Motor neuron (in vitro differentiated cells): ENCODE measurements at regions of chr5 and their contacts with region 1.

Region 1: DNA sequence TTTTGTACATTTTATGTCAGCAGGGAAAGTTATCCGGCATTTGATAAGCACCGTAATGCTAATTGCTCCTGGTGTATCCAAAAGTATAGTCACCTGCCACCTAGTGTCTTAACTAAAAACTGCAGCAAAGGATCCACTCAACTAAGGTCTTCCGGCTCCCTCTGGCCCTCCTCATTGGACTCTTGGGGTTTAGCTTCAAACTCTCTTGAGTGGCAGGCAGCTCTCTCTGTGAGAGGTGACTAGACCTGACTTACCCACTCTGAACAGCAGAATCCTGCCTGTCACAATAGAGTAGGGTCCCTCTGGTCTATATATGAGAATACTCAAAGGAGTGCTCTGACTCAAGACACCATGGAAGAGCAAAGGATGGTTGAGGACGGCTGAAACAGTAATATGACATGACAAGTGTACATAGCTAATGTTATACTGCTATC is 60.3 kb upstream of the CAST start:
- ATAC-seq: peak; percentile 57 to 91 (median 64)
- H3K4me3 ChIP-seq: no peak overlapping the region
- H3K27ac ChIP-seq: no peak overlapping the region
- H3K4me1 ChIP-seq: peaks cover 0 to 16% of the 10 kb centered on the region in 2 donors

Region 2: DNA sequence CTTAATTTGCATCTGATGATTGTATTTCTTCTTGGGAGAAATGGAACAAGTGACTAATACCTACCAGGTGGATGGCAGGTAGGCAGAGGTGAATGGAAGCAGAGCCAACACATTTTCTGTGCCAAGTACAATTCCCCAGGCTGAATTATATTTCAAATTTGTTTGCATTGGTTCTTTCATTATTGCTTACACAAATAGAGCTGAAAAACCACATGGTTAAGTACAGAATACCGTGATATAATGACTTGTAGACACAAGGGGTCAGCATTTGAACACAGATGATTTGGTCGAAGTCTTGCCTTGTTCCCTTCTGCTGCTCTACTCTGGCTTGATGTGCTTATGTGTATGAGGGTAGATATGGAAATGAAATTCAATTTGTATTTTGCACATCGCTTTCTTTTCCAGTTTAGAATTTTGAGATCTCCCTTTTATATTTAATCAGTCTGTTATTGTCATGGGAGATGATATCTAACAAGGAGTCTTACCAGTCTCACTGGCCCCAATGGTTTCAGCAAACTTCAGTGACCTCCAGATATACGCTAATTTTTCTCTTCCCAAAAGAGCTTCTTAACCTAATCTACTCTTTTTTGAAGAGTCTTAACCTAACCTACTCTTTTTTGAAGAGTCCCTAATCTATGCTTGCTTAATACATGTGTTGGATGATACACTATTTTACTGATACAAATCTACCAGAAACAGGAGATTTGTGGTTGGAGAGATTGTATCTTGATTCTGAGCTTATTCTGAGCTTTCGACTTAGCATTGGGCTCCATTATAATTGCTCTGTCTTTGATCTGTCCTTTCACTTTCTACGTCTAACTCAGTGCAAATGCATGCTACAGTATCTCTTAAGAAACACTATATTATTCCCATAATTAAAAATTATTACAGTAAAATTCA is 256.9 kb before region 1 on chr5:
- in situ Hi-C with region 1: loop called in 6 of 9 experiments (anchors 10 to 25 kb)
- ATAC-seq: peak; percentile 89 to 99 (median 93)
- H3K4me3 ChIP-seq: no peak overlapping the region
- H3K27ac ChIP-seq: no peak overlapping the region
- H3K4me1 ChIP-seq: no peaks in the 10 kb centered on the region

Region 3: DNA sequence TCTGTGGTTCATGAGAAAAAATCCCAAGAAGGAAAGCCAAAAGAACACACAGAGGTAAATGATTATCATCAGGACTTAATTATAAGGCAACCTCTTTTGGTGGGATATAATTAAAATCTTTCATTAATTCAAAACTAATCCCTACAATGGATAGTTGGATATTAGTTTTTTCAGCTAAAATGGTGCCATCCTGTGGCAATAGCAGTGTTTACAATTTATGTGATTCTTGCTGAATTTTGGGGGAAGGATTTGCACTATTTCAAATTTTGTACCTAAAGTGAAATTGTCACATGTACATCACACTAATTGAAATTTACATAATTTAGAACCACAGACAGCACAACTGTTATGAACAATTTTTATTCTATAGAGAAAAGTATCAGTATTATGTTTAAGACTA is 127.3 kb after region 1 on chr5:
- in situ Hi-C with region 1: loop called in 1 of 9 experiments (anchors 25 kb)
- ATAC-seq: no peak
- H3K4me3 ChIP-seq: no peak overlapping the region
- H3K27ac ChIP-seq: no peak overlapping the region
- H3K4me1 ChIP-seq: peaks cover 8 to 10% of the 10 kb centered on the region in 2 donors

Region 4: GRCh38 chr5:96963267-96963666 is 361.4 kb after region 1 on chr5:
- in situ Hi-C with region 1: no loop called
- ATAC-seq: peak in 4 of 8 experiments; percentile 27 to 91 (median 60)
- H3K4me3 ChIP-seq: no peak overlapping the region
- H3K27ac ChIP-seq: no peak overlapping the region
- H3K4me1 ChIP-seq: no peaks in the 10 kb centered on the region